AG04450 (cell line): ENCODE measurements at regions of chr5 and their contacts with region 1.

Region 1: GRCh38 chr5:138035605-138036537 is 3.0 kb upstream of the FAM13B start:
- DNase-seq: peak; percentile 68
- H3K4me3 ChIP-seq: no peak overlapping the region
- H3K27ac ChIP-seq: no peak overlapping the region
- H3K27me3 ChIP-seq: no peaks in the 10 kb centered on the region
- CTCF ChIP-seq: peak; percentile 87

Region 2: DNA sequence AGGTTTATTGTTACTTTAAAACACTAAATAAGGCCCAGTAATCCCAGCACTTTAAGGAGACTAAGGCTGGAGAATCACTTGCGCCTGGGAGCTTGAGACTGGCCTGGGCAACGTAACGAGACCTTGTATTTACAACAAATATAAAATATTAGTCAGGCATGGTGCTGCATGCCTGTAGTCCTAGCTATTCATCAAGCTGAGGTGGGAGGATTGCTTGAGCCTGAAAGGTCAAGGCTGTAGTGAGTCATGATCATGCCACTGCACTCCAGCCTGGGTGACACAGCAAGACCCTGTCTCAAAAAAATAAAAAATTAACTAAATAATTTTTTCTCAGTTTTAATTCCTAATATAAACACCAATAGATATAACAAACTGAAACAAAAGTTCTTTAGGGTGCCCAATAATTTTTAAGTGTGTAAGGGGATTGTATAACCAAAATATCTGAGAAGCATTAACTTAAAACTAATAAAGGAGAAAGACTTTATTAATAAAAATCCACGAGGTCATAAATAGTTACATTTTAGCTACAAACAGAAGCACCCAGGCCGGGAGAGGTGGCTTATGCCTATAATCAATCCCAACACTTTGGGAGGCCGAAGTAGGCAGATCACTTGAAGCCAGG is 35.7 kb before region 1 on chr5:
- CTCF ChIA-PET with region 1: interaction called, 10 read pairs
- POLR2A ChIA-PET with region 1: interaction called, 6 read pairs
- DNase-seq: no peak
- H3K4me3 ChIP-seq: no peak overlapping the region
- H3K27ac ChIP-seq: no peak overlapping the region
- H3K27me3 ChIP-seq: no peaks in the 10 kb centered on the region
- CTCF ChIP-seq: no peak

Region 3: DNA sequence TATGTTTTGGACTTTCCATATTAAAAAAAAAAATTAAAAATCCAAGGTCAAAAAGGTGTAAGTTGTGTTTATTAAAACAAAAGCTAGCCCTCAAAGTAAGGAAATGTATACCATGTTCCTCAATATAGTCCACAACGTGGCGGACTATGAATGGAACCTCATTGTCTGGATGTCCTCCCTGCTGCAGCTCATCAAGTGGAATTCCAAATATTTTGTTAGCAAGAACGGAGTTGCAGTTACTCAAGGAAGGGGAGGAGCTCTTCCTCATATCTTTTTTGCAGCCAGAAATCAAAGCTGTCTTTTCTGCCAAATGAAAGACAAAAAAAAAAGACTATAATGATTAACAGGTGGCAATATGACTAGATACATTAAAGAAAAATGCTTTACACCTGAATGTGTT is 17.0 kb before region 1 on chr5:
- CTCF ChIA-PET with region 1: interaction called, 33 read pairs
- POLR2A ChIA-PET with region 1: interaction called, 6 read pairs
- DNase-seq: no peak
- H3K4me3 ChIP-seq: no peak overlapping the region
- H3K27ac ChIP-seq: no peak overlapping the region
- H3K27me3 ChIP-seq: no peaks in the 10 kb centered on the region
- CTCF ChIP-seq: no peak

Region 4: GRCh38 chr5:138025285-138025684 is 10.6 kb before region 1 on chr5:
- CTCF ChIA-PET with region 1: interaction called, 33 read pairs
- POLR2A ChIA-PET with region 1: no interaction called
- DNase-seq: no peak
- H3K4me3 ChIP-seq: no peak overlapping the region
- H3K27ac ChIP-seq: no peak overlapping the region
- H3K27me3 ChIP-seq: no peaks in the 10 kb centered on the region
- CTCF ChIP-seq: no peak

Region 5: GRCh38 chr5:138054847-138055558 is 19.1 kb after region 1 on chr5:
- CTCF ChIA-PET with region 1: interaction called, 20 read pairs
- POLR2A ChIA-PET with region 1: no interaction called
- DNase-seq: no peak
- H3K4me3 ChIP-seq: no peak overlapping the region
- H3K27ac ChIP-seq: no peak overlapping the region
- H3K27me3 ChIP-seq: peaks cover 6% of the 10 kb centered on the region
- CTCF ChIP-seq: no peak

Region 6: DNA sequence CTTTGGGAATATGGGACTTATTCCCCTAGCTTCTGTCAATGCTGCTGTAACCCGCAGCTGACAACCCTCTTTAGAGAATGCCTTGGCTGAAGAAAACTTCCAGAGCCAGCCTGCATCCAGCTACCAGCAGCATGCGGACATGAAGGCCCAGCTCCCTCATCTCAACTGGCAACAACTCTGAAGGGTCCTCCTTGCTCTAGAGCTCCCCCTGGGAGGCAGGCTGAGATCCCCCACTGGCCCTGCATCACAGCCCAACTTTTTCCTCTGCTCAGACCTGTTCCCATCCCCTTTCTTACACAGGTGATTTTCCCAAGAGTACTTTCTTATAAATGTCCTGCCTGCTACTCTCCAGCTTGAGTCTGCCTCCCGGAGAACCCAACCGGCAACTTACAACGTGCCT is 29.2 kb after region 1 on chr5:
- CTCF ChIA-PET with region 1: interaction called, 260 read pairs
- POLR2A ChIA-PET with region 1: no interaction called
- DNase-seq: no peak
- H3K4me3 ChIP-seq: no peak overlapping the region
- H3K27ac ChIP-seq: no peak overlapping the region
- H3K27me3 ChIP-seq: peaks cover 4% of the 10 kb centered on the region
- CTCF ChIP-seq: peak; percentile 33

Region 7: GRCh38 chr5:138096997-138097828 is 61.3 kb after region 1 on chr5:
- CTCF ChIA-PET with region 1: no interaction called
- POLR2A ChIA-PET with region 1: no interaction called
- DNase-seq: no peak
- H3K4me3 ChIP-seq: no peak overlapping the region
- H3K27ac ChIP-seq: no peak overlapping the region
- H3K27me3 ChIP-seq: peaks cover 19% of the 10 kb centered on the region
- CTCF ChIP-seq: no peak

Region 8: DNA sequence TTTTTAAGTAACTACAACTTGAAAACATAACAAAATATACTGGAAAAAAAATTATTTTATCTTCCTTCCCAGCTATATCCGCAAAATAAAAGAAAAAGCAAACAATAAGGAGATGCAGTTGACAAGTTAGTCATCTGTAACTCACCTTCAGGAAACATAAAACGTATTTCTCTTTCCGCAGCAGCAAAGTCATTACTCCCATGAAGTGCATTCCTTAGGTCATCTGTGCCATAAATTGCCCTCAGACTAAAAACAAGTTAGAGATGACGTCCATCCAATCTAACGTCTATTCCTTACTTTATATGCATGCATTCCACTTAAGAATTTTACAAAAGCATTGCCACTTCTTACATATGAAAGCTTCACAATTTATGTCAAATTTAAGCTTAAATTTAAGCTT is 92.5 kb after region 1 on chr5:
- CTCF ChIA-PET with region 1: interaction called, 58 read pairs
- POLR2A ChIA-PET with region 1: no interaction called
- DNase-seq: no peak
- H3K4me3 ChIP-seq: no peak overlapping the region
- H3K27ac ChIP-seq: no peak overlapping the region
- H3K27me3 ChIP-seq: no peaks in the 10 kb centered on the region
- CTCF ChIP-seq: no peak